ENCODE measurements at regions of chr6 and their contacts with region 1.

Region 1: DNA sequence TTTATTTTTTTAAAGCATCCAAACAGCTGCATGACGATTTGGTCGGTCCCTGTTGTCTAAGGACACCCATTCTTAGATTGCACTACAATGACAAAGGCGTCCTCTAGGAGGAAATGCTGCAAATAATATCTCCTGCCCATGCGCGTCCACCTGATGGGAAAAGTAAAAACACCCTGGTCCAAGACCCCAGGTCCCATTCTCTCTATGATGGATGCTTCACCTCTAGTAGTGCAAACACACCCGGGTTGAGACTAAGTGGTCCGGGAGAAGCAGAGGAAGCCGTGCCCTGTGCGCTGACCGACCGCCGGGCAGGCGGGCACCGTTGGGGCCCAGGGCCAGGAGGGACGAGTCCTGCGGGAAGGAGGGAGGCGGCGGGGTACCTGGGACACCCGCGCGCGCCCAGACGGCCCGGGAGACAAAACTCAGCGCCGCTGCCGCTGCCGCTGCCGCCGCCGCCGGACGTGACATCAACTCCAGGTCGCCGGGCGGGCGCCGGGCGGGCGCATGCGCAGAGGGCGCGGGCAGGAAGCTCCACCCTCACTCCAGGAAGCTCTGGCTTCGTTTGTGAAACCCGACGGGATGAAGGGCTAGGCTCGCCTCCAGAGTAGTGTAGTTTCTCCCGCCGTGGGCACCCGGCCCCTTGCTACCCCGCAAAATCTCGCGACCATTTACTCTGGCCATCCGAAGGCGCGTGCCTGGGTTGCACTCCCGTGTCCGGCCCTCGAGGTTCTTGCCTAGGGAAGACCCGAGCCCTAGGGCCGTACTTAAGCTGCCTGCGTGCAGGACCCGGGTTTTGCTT is at the start of gene TBC1D7:
- DNase-seq: peak; percentile 98
- ATAC-seq: peak; percentile 92
- H3K4me3 Mint-ChIP-seq: peak within 1 kb of the TSS; percentile 93
- H3K27ac Mint-ChIP-seq: peak within 1 kb of the TSS; percentile 91
- H3K4me1 Mint-ChIP-seq: peaks cover 20% of the 10 kb centered on the region
- H3K27me3 Mint-ChIP-seq: no peaks in the 10 kb centered on the region
- total RNA-seq, gene TBC1D7: 19.0 to 23.5 TPM

Region 2: GRCh38 chr6:12911387-12911960 is 416.8 kb before region 1 on chr6:
- POLR2A ChIA-PET with region 1: interaction called, 15 read pairs
- DNase-seq: no peak
- ATAC-seq: no peak
- H3K4me3 Mint-ChIP-seq: no peak overlapping the region
- H3K27ac Mint-ChIP-seq: no peak overlapping the region
- H3K4me1 Mint-ChIP-seq: no peaks in the 10 kb centered on the region
- H3K27me3 Mint-ChIP-seq: peaks cover 24% of the 10 kb centered on the region

Region 3: DNA sequence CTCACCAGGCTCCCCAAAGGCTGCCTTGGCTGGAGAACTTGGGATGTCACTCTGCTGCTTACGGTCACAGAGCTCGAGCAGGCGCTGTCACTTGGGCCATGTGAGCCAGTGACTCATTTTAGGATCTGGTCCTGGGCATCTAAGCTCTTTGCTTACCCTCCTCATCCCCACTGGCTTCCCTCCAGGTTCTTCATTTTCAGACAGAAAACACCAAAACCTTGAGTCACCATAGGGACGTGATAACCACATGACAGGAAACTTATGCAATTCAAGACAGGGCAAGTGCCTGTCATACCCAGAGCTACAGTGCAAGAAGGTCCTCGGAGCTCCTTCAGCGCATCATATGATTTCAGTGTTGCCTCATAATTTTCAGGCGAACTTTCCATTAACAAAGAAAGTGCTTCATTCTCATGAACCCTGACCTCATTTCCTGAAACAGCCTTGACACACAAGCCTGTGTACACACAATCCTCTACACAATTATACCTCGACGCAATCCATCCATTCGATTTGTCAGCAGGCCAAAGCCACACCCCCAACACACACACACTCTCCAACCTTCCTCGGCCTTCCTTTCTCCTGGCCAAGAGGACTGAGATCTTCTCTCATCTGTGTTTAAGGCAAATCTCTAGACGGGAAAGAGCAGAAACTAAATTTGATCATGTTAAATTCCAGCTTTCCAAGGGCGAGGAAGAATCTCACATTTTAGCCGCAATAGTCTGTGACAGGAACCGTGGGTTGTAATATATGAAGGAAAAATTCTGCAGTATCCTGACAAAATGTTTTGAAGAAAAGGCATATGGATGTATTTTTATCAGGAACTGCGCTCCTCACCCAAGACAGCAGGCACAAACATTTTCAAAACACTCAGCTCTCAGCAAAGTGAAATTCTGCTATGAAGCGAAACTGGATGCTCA is 25.3 kb before region 1 on chr6:
- POLR2A ChIA-PET with region 1: interaction called, 21 read pairs
- DNase-seq: no peak
- ATAC-seq: peak; percentile 91
- H3K4me3 Mint-ChIP-seq: peak overlapping the region; percentile 17
- H3K27ac Mint-ChIP-seq: peak overlapping the region; percentile 76
- H3K4me1 Mint-ChIP-seq: peaks cover 23% of the 10 kb centered on the region
- H3K27me3 Mint-ChIP-seq: no peaks in the 10 kb centered on the region

Region 4: DNA sequence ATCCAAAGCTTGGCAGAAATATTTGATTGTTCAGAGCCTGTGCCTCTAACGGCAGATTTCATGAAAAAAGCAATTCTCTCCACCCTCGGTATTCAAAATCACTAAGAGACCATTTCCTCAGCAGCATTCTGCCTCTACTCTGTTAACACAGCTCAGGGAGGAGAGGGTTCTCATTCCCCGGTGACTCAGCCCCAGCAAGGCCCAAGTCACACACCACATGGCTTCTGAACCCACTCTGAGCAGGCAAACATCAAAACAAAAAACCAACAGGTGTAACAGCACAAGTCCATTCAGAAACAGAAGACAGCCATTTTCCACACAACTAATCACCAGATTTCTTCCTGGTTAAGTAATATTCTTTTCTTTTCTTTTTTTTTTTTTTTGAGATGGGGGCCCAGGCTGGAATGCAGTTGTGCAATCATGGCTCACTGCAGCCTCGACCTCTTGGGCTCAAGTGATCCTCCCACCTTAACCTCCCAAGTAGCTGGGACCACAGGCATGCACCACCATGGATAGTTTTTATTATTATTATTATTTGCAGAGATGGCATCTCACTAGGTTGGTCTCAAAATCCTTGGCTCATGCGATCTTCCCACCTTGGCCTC is 103.7 kb after region 1 on chr6:
- POLR2A ChIA-PET with region 1: interaction called, 11 read pairs
- DNase-seq: no peak
- ATAC-seq: peak; percentile 30
- H3K4me3 Mint-ChIP-seq: peak overlapping the region; percentile 71
- H3K27ac Mint-ChIP-seq: peak overlapping the region; percentile 89
- H3K4me1 Mint-ChIP-seq: peaks cover 82% of the 10 kb centered on the region
- H3K27me3 Mint-ChIP-seq: no peaks in the 10 kb centered on the region

Region 5: DNA sequence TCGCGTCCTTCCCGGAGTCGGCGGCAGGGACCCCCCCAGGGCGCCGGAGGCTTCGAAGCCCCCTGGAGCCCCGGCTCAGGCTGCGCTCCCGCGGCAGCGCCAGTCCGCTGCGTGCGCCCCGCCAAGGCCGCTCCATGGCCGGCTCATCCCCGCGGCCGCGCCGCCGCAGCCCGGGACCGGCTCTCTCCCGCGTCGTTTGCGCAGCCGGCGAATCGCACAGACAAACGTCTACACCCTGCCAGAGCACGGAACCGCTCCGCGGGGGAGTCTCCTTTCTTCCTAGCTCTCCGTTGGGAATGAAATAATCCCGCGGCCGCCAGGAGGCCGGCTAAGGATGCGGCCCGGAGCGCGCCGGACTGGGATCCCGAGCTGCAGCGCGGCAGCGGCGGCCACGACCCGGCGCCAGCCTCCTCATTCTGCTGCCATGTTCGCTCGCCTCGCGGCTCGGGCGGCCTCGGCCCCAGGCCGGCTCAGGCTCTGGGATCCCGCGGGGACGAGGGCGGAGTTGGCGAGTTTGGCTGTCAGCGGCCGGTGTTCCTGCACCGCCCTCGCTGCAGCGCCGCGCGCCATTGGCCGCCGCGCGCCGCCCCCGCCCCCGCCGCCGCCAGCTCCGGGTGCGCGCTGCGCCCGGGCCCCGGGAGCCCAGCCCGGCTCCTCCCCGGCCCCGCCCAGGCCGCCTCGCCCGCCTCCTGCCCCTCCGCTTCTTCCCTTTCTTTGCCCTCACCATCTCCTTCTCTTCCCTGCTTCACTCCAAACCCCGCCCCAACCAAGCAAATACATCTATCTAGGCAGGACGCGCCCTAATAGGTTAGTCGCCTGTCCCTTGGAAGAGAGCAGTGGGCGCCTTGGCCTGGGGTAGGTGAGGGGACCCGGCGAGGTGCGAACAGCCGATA is 159.1 kb after region 1 on chr6 and contains the start of gene GFOD1:
- POLR2A ChIA-PET with region 1: interaction called, 18 read pairs
- DNase-seq: peak; percentile 87
- ATAC-seq: peak; percentile 83
- H3K4me3 Mint-ChIP-seq: peak within 1 kb of the TSS; percentile 94
- H3K27ac Mint-ChIP-seq: peak within 1 kb of the TSS; percentile 78
- H3K4me1 Mint-ChIP-seq: peaks cover 40% of the 10 kb centered on the region
- H3K27me3 Mint-ChIP-seq: peaks cover 9% of the 10 kb centered on the region
- total RNA-seq, gene GFOD1: 5.2 to 5.9 TPM

Region 6: GRCh38 chr6:13574149-13574570 is 245.9 kb after region 1 on chr6:
- POLR2A ChIA-PET with region 1: interaction called, 36 read pairs
- DNase-seq: peak; percentile 95
- ATAC-seq: peak; percentile 84
- H3K4me3 Mint-ChIP-seq: peak overlapping the region; percentile 100
- H3K27ac Mint-ChIP-seq: peak overlapping the region; percentile 99
- H3K4me1 Mint-ChIP-seq: peaks cover 23% of the 10 kb centered on the region
- H3K27me3 Mint-ChIP-seq: no peaks in the 10 kb centered on the region

Region 7: GRCh38 chr6:13614926-13615798 is 286.9 kb after region 1 on chr6 and contains the start of gene NOL7:
- POLR2A ChIA-PET with region 1: interaction called, 11 read pairs
- DNase-seq: peak; percentile 99
- ATAC-seq: peak; percentile 91
- H3K4me3 Mint-ChIP-seq: peak within 1 kb of the TSS; percentile 98
- H3K27ac Mint-ChIP-seq: peak within 1 kb of the TSS; percentile 96
- H3K4me1 Mint-ChIP-seq: peaks cover 44% of the 10 kb centered on the region
- H3K27me3 Mint-ChIP-seq: no peaks in the 10 kb centered on the region
- total RNA-seq, gene NOL7: 54.0 to 55.5 TPM

Measured in activated naive CD8-positive, alpha-beta T cell treated with anti-CD3 and anti-CD28 coated beads, Interleukin-2, amount 10 ng/mL, durations not matched to agents 7 days and 5 days (primary cell).